A549 (cell line): ENCODE measurements at regions of chr17 and their contacts with region 1.

Region 1: DNA sequence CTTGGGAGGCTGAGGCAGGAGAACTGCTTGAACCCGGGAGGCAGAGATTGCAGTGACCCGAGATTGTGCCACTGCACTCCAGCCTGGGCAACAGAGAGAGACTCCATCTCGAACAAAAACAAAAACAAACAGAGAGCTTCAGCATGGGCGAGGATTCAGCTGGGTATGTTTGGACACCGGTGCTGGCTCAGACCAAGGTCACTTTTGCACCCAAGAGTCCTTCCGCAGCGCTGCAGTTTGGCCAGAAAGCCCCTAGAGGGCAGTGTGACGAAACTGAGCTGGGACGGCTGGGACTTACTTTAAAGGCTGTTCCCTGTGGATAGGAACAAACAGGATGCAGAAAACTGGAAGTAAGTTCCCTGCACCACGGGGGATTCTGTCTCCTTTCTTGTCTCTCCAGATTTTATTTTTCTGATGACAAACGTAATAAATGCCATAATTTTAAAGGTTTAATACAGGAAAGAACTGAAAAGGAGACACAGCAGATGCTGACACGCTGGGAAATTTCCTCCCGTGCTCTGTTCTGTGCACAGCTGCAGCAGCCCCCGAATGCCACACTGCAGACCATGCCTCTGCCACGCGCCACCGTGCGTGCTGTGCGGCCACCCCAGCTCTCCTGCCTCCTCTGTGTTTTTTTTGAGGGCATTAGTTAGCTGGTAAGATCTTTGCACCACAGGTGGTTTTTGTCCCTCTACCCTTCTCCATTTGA is 25.2 kb upstream of the USP36 start:
- DNase-seq: peak; percentile 77 to 83
- ATAC-seq: peak; percentile 72 to 79
- H3K4me3 ChIP-seq: no peak overlapping the region
- H3K27ac ChIP-seq: peak overlapping the region; percentile 24 to 71; a peak in 3 of 6 replicates
- H3K4me1 ChIP-seq: peaks cover 46% of the 10 kb centered on the region
- CTCF ChIP-seq: peak; percentile 95
- EP300 ChIP-seq: no peak
- POLR2A ChIP-seq: no peak
- RAD21 ChIP-seq: peak; percentile 88 to 93

Region 2: GRCh38 chr17:78759203-78759968 is 106.5 kb before region 1 on chr17:
- CTCF ChIA-PET with region 1: no interaction called
- POLR2A ChIA-PET with region 1: no interaction called
- DNase-seq: no peak
- ATAC-seq: no peak; a peak in 1 of 6 replicates
- H3K4me3 ChIP-seq: no peak overlapping the region
- H3K27ac ChIP-seq: no peak overlapping the region
- H3K4me1 ChIP-seq: 0 out of 3 replicates have a peak, but pooled peaks cover 2% of the 10 kb centered on the region
- CTCF ChIP-seq: no peak
- EP300 ChIP-seq: no peak
- POLR2A ChIP-seq: no peak
- RAD21 ChIP-seq: no peak

Region 3: DNA sequence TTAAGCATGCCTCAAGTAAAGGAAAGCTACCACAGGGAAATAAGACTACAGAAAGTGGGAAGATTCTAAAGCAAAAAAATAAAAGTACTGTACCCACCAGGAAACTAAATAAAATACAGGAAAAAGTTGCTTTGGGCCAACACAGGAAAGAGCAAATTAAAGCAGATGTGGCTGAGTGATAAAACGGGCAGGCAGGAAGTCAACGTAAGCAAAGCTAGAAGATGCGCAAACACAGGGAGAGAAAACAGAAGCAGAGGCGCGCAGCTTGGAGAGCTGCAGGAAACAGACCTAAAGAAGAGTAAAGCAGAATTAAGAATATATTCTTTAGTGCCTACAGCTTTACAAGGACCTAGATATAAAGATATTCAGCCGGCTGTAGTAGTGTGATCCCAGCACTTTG is 46.9 kb before region 1 on chr17:
- CTCF ChIA-PET with region 1: no interaction called
- POLR2A ChIA-PET with region 1: no interaction called
- DNase-seq: no peak
- ATAC-seq: no peak
- H3K4me3 ChIP-seq: no peak overlapping the region
- H3K27ac ChIP-seq: no peak overlapping the region
- H3K4me1 ChIP-seq: no peaks in the 10 kb centered on the region
- CTCF ChIP-seq: no peak
- EP300 ChIP-seq: no peak
- POLR2A ChIP-seq: no peak
- RAD21 ChIP-seq: no peak

Region 4: GRCh38 chr17:78852709-78853121 is 13.1 kb before region 1 on chr17:
- CTCF ChIA-PET with region 1: interaction called, 55 read pairs
- POLR2A ChIA-PET with region 1: no interaction called
- DNase-seq: peak in 1 of 2 experiments; percentile 41
- ATAC-seq: 0 out of 6 replicates have a peak, but pooled peaks of 1 of the 2 experiments have one; percentile 12
- H3K4me3 ChIP-seq: no peak overlapping the region
- H3K27ac ChIP-seq: no peak overlapping the region
- H3K4me1 ChIP-seq: no peaks in the 10 kb centered on the region
- CTCF ChIP-seq: no peak
- EP300 ChIP-seq: no peak
- POLR2A ChIP-seq: no peak
- RAD21 ChIP-seq: no peak; a peak in 1 of 5 replicates

Region 5: GRCh38 chr17:78890498-78890897 is 24.7 kb after region 1 on chr17:
- CTCF ChIA-PET with region 1: interaction called, 32 read pairs
- POLR2A ChIA-PET with region 1: no interaction called
- DNase-seq: no peak
- ATAC-seq: no peak
- H3K4me3 ChIP-seq: no peak overlapping the region
- H3K27ac ChIP-seq: no peak overlapping the region
- H3K4me1 ChIP-seq: peaks cover 17% of the 10 kb centered on the region
- CTCF ChIP-seq: no peak
- EP300 ChIP-seq: no peak
- POLR2A ChIP-seq: no peak
- RAD21 ChIP-seq: no peak

Region 6: GRCh38 chr17:78903101-78903779 is 37.4 kb after region 1 on chr17 and contains the start of gene CEP295NL:
- CTCF ChIA-PET with region 1: interaction called, 36 read pairs
- POLR2A ChIA-PET with region 1: no interaction called
- DNase-seq: peak; percentile 57 to 66
- ATAC-seq: peak; percentile 47 to 78
- H3K4me3 ChIP-seq: no peak within 1 kb of the TSS
- H3K27ac ChIP-seq: peak within 1 kb of the TSS in 1 of 2 experiments; percentile 2; a peak in 1 of 6 replicates
- H3K4me1 ChIP-seq: peaks cover 26% of the 10 kb centered on the region
- CTCF ChIP-seq: no peak
- EP300 ChIP-seq: no peak
- POLR2A ChIP-seq: no peak
- RAD21 ChIP-seq: no peak
- polyA plus RNA-seq, gene CEP295NL: 0.09 and 0.10 TPM in 2 replicates

Region 7: GRCh38 chr17:78925234-78925633 is 59.4 kb after region 1 on chr17 and contains the start of gene TIMP2:
- CTCF ChIA-PET with region 1: interaction called, 21 read pairs
- POLR2A ChIA-PET with region 1: no interaction called
- DNase-seq: peak; percentile 84 to 87
- ATAC-seq: peak; percentile 72 to 76
- H3K4me3 ChIP-seq: peak within 1 kb of the TSS; percentile 86
- H3K27ac ChIP-seq: peak within 1 kb of the TSS; percentile 97 to 99
- H3K4me1 ChIP-seq: peaks cover 46% of the 10 kb centered on the region
- CTCF ChIP-seq: no peak
- EP300 ChIP-seq: no peak
- POLR2A ChIP-seq: peak; percentile 77
- RAD21 ChIP-seq: peak in 1 of 2 experiments; percentile 34; a peak in 2 of 5 replicates
- polyA plus RNA-seq, gene TIMP2: 68.1 and 77.8 TPM in 2 replicates

Region 8: GRCh38 chr17:78947235-78948127 is 81.6 kb after region 1 on chr17:
- CTCF ChIA-PET with region 1: interaction called, 19 read pairs
- POLR2A ChIA-PET with region 1: no interaction called
- DNase-seq: no peak
- ATAC-seq: peak in 1 of 2 experiments; percentile 30; a peak in 2 of 6 replicates
- H3K4me3 ChIP-seq: no peak overlapping the region
- H3K27ac ChIP-seq: peak overlapping the region in 1 of 2 experiments; percentile 51; a peak in 2 of 6 replicates
- H3K4me1 ChIP-seq: no peaks in the 10 kb centered on the region; the same call in 2 of the 3 replicates
- CTCF ChIP-seq: no peak
- EP300 ChIP-seq: no peak
- POLR2A ChIP-seq: no peak
- RAD21 ChIP-seq: no peak

Region 9: DNA sequence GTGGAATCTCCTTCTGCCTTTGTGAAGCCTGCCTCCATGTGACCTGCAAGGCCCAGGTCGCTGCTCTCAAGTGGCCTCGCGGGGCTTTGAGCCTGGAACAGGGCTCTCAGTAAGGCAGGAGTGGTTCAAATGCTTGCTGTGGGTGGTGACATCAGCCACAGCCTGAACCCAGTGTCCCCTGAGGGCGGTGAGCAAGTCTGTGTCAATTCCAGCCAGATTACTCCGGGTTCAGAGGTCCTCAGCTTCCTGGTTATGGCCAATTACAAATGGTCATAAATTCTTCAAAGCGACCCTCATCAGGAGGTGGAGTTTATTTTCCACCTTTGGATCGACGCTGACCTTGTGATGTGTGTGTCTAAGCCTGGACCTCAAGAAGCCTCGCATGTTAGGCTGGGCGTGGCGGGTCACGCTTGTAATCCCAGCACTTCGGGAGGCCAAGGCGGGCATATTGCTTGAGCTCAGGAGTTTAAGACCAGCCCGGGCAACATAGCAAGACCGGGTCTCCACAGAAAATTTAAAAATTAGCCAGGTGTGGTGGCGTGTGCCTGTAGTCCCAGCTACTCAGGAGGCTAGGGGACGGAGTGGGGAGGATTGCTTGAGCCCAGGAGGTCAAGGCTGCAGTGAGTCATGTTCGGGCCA is 96.6 kb after region 1 on chr17:
- CTCF ChIA-PET with region 1: interaction called, 321 read pairs
- POLR2A ChIA-PET with region 1: no interaction called
- DNase-seq: peak in 1 of 2 experiments; percentile 57
- ATAC-seq: no peak
- H3K4me3 ChIP-seq: no peak overlapping the region
- H3K27ac ChIP-seq: peak overlapping the region; percentile 5 to 54; a peak in 4 of 6 replicates
- H3K4me1 ChIP-seq: peaks cover 24% of the 10 kb centered on the region
- CTCF ChIP-seq: no peak
- EP300 ChIP-seq: no peak
- POLR2A ChIP-seq: no peak
- RAD21 ChIP-seq: no peak